GM12878 (cell line): ENCODE measurements at regions of chr10 and their contacts with region 1.

Region 1: GRCh38 chr10:74165530-74165901 is 14.5 kb downstream of the ADK start:
- DNase-seq: no peak
- ATAC-seq: peak; percentile 26
- H3K4me3 ChIP-seq: 0 out of 2 replicates have a peak overlapping the region, but pooled peaks have one; percentile 7
- H3K27ac ChIP-seq: peak overlapping the region; percentile 66; the same call in 1 of the 2 replicates
- H3K4me1 ChIP-seq: peaks cover 53% of the 10 kb centered on the region
- H3K27me3 ChIP-seq: no peaks in the 10 kb centered on the region
- CTCF ChIP-seq: no peak
- EP300 ChIP-seq: no peak
- POLR2A ChIP-seq: no peak
- RAD21 ChIP-seq: no peak

Region 2: DNA sequence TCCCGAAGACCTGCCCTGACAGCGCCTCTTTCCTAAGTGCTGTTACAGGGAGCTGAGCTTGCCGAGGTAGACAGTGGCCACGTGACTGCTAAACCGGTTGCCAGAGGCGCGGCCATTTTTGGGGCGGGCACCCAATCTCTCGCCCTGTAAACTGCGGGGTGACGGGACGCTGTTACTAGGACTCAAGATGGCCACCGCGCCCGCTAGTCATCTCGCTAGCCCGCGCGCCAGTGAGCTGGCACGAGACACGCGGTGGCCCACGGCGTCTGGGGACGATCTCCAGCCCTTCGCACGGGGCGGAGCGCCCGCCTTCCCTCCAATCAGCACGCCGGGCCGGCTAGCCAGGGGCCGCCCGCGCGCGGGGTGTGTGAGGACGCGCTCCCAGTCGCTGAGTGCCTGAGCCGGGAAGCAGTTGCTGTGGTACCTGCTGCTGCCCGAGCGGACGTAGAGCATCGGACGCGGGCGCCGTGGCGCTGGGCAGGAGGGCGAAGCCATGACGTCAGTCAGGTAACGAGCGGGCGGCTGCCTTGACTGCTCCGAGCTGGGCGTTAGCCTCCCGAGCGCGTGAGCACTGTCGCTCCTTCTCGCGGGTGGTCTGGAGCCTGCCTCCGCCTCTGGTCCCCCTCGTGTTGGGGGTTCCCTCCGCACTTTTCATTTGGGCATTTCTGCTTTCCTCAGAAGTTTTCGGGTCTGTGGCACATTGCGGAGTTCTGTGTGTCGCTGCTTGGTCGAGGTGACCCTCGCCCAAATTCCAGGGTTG is 11.0 kb after region 1 on chr10:
- CTCF ChIA-PET with region 1: interaction called, 5 read pairs
- POLR2A ChIA-PET with region 1: interaction called, 40 read pairs
- RAD21 ChIA-PET with region 1: interaction called, 8 read pairs
- SMC1A ChIA-PET with region 1: interaction called, 18 read pairs
- in situ Hi-C with region 1: no loop called
- intact Hi-C with region 1: no loop called
- DNase-seq: peak; percentile 84
- ATAC-seq: peak; percentile 95
- H3K4me3 ChIP-seq: peak overlapping the region; percentile 88
- H3K27ac ChIP-seq: peak overlapping the region; percentile 74
- H3K4me1 ChIP-seq: peaks cover 22% of the 10 kb centered on the region
- H3K27me3 ChIP-seq: no peaks in the 10 kb centered on the region
- CTCF ChIP-seq: no peak
- EP300 ChIP-seq: peak in 1 of 2 experiments; percentile 22; a peak in 2 of 4 replicates
- POLR2A ChIP-seq: peak; percentile 96
- RAD21 ChIP-seq: no peak